Left ventricle myocardium superior (tissue), 1 donor: ENCODE measurements at regions of chr11 and their contacts with region 1.

Region 1: DNA sequence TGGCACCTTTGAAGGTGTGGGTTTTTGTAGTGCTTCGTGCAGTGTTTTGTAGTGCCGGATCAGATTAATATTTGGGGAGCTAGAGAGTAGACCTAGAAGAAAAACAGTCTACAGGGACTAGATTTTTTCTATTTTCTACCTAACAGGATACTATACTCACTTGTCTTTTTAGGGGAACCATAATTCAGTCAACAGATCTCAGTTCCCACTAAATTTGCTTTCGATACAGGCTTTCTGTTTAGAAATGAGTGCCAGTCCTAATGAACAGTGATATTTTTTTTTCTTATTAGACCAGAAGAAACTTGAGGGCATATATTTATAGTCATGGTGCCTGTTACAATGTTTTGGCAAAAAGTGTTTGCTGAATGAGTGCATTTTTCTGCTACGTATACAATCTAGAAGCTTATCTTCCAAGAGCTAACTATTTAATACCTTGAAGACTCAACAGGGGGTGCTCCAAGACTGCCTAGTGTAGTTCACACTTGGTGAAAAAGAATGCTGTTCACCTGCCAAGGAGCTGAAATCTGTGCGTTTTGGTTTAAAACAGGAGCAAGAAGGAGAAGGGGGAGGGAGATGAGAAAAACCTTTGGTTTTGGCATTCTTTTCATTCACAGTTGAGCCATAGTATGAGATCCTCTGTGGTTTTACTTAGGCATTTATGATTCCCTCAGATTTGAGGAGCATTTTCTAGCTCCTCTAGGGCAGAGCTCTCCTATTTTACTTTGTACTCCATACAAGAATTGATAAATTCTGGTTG is 44.9 kb upstream of the VSTM5 start:
- DNase-seq: no peak
- ATAC-seq: peak; percentile 69

Region 2: DNA sequence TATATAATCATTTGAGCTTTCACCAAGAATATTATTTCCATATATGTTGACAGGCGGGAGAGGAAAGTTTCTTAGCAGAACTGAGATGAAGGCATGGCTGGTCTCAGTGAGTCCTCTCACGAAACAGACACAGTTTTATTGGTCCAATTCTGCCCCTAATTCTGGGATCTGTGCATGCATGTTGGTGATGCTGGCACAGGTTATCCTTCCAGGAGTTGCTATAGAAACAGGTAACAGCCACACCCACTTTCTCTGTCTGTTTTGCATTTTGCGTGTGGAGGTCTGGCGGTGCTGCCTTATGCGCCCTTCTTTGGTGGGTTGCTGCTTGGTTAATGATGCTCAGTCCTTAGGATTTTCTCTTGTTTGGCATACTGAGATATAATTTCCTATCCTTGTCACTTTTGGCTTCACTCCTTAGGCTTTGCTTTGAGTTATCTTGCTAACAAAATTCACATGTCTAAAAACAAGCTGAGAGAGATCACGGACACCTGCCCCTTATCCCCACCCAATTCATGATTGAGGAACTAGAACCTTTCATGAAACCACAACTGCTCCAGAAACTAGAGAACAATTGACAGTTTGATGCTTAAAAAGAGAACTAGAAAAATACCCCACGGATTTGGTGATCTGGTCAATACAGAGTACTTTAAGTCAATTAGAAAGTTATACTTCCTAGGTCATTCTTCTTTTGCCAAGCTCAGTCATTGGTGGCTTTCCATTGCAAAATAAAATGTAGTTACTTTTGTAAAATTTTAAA is 1481.3 kb before region 1 on chr11:
- intact Hi-C with region 1: no loop called
- DNase-seq: no peak
- ATAC-seq: no peak

Region 3: GRCh38 chr11:94417386-94417987 is 522.2 kb after region 1 on chr11:
- intact Hi-C with region 1: loop called (anchors 10 kb)
- DNase-seq: no peak
- ATAC-seq: peak; percentile 49

Region 4: GRCh38 chr11:94504689-94505293 is 609.5 kb after region 1 on chr11:
- intact Hi-C with region 1: loop called (anchors 5 kb)
- DNase-seq: no peak
- ATAC-seq: no peak